ENCODE measurements at regions of chr20 and their contacts with region 1.

Region 1: DNA sequence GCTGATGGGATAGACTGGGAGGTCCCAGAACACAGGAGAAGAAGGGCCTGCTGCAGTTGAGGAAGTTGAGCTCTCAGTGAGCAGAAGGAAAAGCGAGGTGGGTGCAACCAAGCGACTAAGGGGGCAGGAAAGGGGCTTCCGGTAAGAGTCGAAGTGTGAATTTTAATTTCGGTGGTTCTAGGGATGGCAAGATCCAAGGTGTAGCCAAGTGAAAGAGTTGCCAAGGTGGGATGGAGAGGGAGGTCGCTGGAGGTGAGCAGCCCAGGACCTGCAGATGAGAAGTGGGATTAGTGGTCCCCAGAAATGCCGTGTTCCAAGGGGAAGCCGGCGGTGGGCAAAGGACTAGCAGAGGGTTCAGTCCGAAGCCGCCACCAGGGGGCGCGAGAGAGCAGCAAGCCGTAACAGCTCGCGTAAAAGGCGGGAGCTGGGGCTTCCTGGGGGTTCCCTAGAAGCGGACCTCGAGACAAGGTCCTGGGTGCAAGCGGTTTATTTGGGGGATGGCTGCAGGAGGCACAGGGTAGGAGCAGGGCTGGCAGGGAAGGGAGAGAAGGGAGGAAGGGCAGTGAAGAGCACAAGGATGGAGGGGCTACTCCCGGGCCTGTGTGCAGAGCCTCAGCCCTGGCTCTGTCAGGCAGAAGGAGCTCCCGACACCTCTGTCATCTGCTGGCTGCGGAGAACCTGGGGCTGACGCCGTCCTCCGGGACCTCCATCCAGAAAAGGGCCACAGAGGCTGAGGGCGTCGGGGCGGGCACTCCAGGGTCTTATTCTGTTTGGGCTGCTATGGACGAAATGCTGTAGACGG is 103.6 kb downstream of the PAX1 start:
- DNase-seq: peak; percentile 72
- H3K4me3 ChIP-seq: peak overlapping the region in 1 of 2 experiments; percentile 33; a peak in 1 of 4 replicates
- H3K27ac ChIP-seq: no peak overlapping the region
- H3K4me1 ChIP-seq: no peaks in the 10 kb centered on the region
- H3K27me3 ChIP-seq: no peaks in the 10 kb centered on the region
- CTCF ChIP-seq: peak; percentile 83
- EP300 ChIP-seq: no peak
- RAD21 ChIP-seq: peak; percentile 53

Region 2: GRCh38 chr20:21874127-21874526 is 65.1 kb after region 1 on chr20:
- CTCF ChIA-PET with region 1: no interaction called
- POLR2A ChIA-PET with region 1: no interaction called
- DNase-seq: no peak
- H3K4me3 ChIP-seq: no peak overlapping the region
- H3K27ac ChIP-seq: no peak overlapping the region
- H3K4me1 ChIP-seq: no peaks in the 10 kb centered on the region
- H3K27me3 ChIP-seq: no peaks in the 10 kb centered on the region
- CTCF ChIP-seq: no peak
- EP300 ChIP-seq: no peak
- RAD21 ChIP-seq: no peak

Region 3: GRCh38 chr20:22106308-22106938 is 297.4 kb after region 1 on chr20:
- CTCF ChIA-PET with region 1: interaction called, 13 read pairs
- POLR2A ChIA-PET with region 1: no interaction called
- DNase-seq: peak; percentile 11
- H3K4me3 ChIP-seq: peak overlapping the region in 1 of 2 experiments; percentile 26; a peak in 1 of 4 replicates
- H3K27ac ChIP-seq: no peak overlapping the region
- H3K4me1 ChIP-seq: no peaks in the 10 kb centered on the region
- H3K27me3 ChIP-seq: no peaks in the 10 kb centered on the region
- CTCF ChIP-seq: peak; percentile 28; the same call in 1 of the 2 replicates
- EP300 ChIP-seq: no peak
- RAD21 ChIP-seq: peak; percentile 65

Measured in SK-N-SH (cell line).